Natural killer cell (primary cell): ENCODE measurements at regions of chr11 and their contacts with region 1.

Region 1: DNA sequence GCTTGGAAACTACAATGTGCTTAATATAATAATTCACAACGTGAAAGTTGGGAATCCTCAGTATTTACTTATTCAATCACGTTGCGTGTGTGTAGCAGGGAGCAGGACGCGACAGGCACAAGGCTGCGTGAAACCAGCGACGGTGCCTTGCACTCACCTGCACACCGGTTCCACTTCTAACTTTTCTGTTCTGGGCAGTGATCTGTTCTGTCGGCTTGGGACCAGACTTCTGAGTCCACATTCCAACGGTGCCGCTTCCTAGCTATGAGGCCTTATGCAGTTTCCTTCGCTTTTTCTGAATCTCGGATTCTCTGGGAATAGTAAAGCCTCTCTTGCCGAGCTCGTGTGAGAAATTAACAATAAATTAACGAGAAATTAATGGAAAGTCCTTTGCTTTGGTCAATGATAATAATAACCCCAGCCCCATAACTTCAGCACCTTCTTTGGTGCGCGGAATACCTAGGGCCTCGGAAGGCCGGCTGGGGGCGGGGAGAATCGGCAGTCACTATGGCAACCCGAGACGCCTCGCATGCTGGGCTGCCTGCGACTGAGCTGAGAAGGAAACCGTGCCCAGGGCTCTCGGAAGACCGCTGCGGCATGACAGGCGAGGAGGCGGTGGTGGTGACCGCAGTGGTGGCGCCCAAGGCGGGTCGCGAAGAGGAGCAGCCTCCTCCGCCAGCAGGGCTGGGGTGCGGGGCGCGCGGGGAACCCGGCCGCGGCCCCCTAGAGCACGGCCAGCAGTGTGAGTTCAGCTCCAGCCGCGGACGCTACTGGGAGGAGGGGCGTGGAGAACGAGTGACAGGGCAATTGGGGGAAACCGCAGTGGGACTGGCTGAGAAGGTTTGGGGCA is at the start of gene C11orf97:
- DNase-seq: peak; percentile 49 to 71
- ATAC-seq: peak; percentile 82 to 88 (median 85)
- H3K4me3 ChIP-seq: peak within 1 kb of the TSS; percentile 30
- H3K4me3 Mint-ChIP-seq: peak within 1 kb of the TSS; percentile 92
- H3K27ac ChIP-seq: no peak within 1 kb of the TSS
- H3K27ac Mint-ChIP-seq: peak within 1 kb of the TSS; percentile 80 to 82
- H3K4me1 ChIP-seq: peaks cover 11% of the 10 kb centered on the region
- H3K4me1 Mint-ChIP-seq: peaks cover 17 to 22% of the 10 kb centered on the region in 2 donors
- H3K27me3 ChIP-seq: no peaks in the 10 kb centered on the region
- H3K27me3 Mint-ChIP-seq: peaks cover 5 to 18% of the 10 kb centered on the region in 2 donors
- CTCF ChIP-seq: no peak
- total RNA-seq, gene C11orf97: not detected

Region 2: DNA sequence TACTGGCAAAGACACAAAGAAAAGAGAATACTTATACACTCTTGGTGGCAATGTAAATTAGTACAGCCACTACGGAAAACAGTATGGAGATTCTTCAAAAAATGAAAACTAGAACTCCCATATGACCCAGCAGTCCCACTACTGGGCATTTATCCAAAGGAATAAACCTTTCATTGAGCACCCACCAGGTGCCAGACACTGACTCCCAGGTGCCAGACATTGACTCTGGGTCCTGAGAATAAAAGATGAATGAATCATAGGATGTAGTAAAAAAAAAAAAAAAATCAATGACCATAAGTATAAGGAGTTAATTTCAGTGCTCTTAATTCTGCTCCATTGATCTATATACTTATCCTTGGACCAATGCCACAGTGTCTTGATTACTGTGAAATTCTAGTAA is 462.8 kb before region 1 on chr11:
- intact Hi-C with region 1: no loop called
- DNase-seq: no peak
- ATAC-seq: no peak
- H3K4me3 ChIP-seq: no peak overlapping the region
- H3K4me3 Mint-ChIP-seq: no peak overlapping the region
- H3K27ac ChIP-seq: no peak overlapping the region
- H3K27ac Mint-ChIP-seq: no peak overlapping the region
- H3K4me1 ChIP-seq: no peaks in the 10 kb centered on the region
- H3K4me1 Mint-ChIP-seq: no peaks in the 10 kb centered on the region
- H3K27me3 ChIP-seq: no peaks in the 10 kb centered on the region
- H3K27me3 Mint-ChIP-seq: peaks cover 0 to 3% of the 10 kb centered on the region in 2 donors
- CTCF ChIP-seq: no peak

Region 3: GRCh38 chr11:94449437-94449836 is 62.7 kb before region 1 on chr11:
- intact Hi-C with region 1: no loop called
- DNase-seq: no peak
- ATAC-seq: no peak
- H3K4me3 ChIP-seq: no peak overlapping the region
- H3K4me3 Mint-ChIP-seq: no peak overlapping the region
- H3K27ac ChIP-seq: no peak overlapping the region
- H3K27ac Mint-ChIP-seq: no peak overlapping the region
- H3K4me1 ChIP-seq: no peaks in the 10 kb centered on the region
- H3K4me1 Mint-ChIP-seq: peaks cover 6 to 12% of the 10 kb centered on the region in 2 donors
- H3K27me3 ChIP-seq: no peaks in the 10 kb centered on the region
- H3K27me3 Mint-ChIP-seq: no peaks in the 10 kb centered on the region
- CTCF ChIP-seq: no peak

Region 4: GRCh38 chr11:96215110-96215782 is 1703.1 kb after region 1 on chr11:
- intact Hi-C with region 1: loop called (anchors 5 kb)
- DNase-seq: peak; percentile 30 to 62
- ATAC-seq: peak; percentile 77 to 90 (median 80)
- H3K4me3 ChIP-seq: no peak overlapping the region
- H3K4me3 Mint-ChIP-seq: peak overlapping the region; percentile 65
- H3K27ac ChIP-seq: peak overlapping the region; percentile 83
- H3K27ac Mint-ChIP-seq: peak overlapping the region; percentile 89 to 90
- H3K4me1 ChIP-seq: peaks cover 39% of the 10 kb centered on the region
- H3K4me1 Mint-ChIP-seq: peaks cover 52 to 57% of the 10 kb centered on the region in 2 donors
- H3K27me3 ChIP-seq: no peaks in the 10 kb centered on the region
- H3K27me3 Mint-ChIP-seq: no peaks in the 10 kb centered on the region
- CTCF ChIP-seq: no peak